PC-9 (cell line): ENCODE measurements at regions of chr12 and their contacts with region 1.

Region 1: DNA sequence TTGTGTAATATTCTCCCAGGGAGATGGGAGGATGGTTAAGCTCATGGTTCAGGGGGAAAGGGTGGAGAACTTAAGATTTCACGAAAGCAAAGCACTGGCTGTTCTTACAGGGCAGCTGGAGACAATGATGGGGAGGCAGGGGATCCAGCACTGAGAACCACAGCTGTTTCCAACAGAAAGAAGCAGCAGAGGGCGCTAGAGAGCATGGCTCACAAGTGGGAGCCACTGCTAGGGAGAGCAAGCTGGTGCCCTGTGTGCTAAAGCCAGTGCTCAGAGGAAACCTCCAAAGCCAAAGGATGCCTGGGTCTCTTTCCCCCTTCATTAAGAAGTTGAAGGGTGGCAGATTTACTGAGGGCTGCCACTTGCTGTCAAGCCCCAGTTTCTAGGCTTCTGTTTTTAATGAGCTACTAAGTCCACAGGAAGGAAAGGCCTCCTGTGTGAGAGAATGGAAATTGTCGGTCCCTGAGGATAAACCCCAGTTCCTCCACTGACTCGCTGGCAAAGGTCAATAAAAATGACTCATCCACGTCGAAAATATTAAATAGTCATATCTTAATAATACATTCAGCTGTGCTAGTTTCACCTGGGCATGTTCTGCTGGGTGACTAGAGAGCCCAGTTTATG is 199.7 kb downstream of the ANO2 start:
- DNase-seq: peak in 1 of 2 experiments; percentile 49
- H3K4me3 ChIP-seq: no peak overlapping the region
- H3K27ac ChIP-seq: no peak overlapping the region
- H3K4me1 ChIP-seq: no peaks in the 10 kb centered on the region
- H3K27me3 ChIP-seq: peaks cover 45% of the 10 kb centered on the region
- CTCF ChIP-seq: peak; percentile 79

Region 2: GRCh38 chr12:5650829-5651461 is 94.4 kb before region 1 on chr12:
- CTCF ChIA-PET with region 1: no interaction called
- POLR2A ChIA-PET with region 1: no interaction called
- intact Hi-C with region 1: no loop called
- DNase-seq: no peak
- H3K4me3 ChIP-seq: no peak overlapping the region
- H3K27ac ChIP-seq: no peak overlapping the region
- H3K4me1 ChIP-seq: no peaks in the 10 kb centered on the region
- H3K27me3 ChIP-seq: peaks cover 36% of the 10 kb centered on the region; the same call in 1 of the 2 replicates
- CTCF ChIP-seq: no peak

Region 3: DNA sequence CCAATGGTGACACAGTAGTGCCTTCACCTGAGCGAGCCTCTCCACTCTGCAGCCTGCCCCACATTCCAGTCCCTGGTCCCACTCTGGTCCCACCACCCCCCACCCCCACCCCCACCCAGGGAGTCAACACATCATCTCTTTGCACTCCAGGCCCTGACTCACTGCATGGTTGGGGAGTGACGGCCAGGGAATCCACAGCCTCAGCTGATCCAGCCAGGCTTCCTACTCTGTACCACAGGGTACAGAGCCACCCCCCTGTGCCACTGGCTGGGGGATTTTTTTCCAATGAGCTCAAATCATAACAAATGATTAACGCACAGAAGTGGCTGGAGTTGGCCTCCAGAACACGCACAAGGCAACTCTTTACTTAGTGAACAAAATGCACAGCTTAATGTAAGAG is 79.8 kb before region 1 on chr12:
- CTCF ChIA-PET with region 1: no interaction called
- POLR2A ChIA-PET with region 1: no interaction called
- intact Hi-C with region 1: no loop called
- DNase-seq: no peak
- H3K4me3 ChIP-seq: no peak overlapping the region
- H3K27ac ChIP-seq: no peak overlapping the region
- H3K4me1 ChIP-seq: no peaks in the 10 kb centered on the region
- H3K27me3 ChIP-seq: 0 out of 2 replicates have a peak, but pooled peaks cover 9% of the 10 kb centered on the region
- CTCF ChIP-seq: no peak

Region 4: GRCh38 chr12:5889381-5890047 is 144.1 kb after region 1 on chr12:
- CTCF ChIA-PET with region 1: no interaction called
- POLR2A ChIA-PET with region 1: no interaction called
- intact Hi-C with region 1: loop called (anchors 10 kb)
- DNase-seq: peak in 1 of 2 experiments; percentile 25
- H3K4me3 ChIP-seq: no peak overlapping the region
- H3K27ac ChIP-seq: no peak overlapping the region
- H3K4me1 ChIP-seq: no peaks in the 10 kb centered on the region
- H3K27me3 ChIP-seq: peaks cover 60% of the 10 kb centered on the region
- CTCF ChIP-seq: no peak; the same call in 1 of the 2 replicates